ENCODE measurements at regions of chr14 and their contacts with region 1.

Region 1: DNA sequence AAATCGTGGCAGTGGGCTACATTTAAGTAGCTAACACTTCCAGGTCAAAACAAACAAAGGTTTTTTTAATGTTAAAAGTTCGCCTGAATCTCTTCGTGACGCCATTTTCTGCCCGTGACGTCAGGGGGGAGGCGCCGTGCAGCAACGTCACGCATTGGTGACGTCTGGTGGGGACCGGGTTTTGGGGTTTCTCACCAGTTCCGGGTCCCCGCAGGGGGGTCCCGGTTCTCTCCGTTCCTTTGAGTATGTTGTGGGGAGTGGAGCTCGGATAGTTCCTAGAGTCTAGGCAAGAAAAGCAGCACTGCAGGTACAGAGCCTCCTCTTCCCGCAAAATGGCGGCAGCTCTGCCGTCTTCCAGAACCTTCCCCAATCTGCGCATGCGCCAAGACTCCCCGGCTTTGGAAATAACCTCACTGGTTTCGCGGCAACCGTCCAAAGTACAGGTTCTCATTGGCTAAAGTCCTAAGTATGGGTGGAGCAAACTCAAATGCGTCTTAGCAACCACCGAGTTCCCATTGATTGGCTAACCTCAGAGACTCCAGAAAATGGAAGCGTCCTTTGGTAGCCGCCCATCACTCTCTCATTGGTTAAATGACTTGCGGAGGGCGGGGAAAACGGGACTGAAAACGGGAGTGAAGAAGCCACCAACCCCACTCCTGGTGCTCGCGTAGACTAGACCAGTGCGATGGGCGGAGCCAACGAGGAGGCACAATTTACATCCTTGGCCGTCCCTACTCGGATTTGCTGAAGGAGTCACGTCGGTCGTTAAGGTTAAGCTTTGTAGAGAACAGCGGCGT is at the start of gene RBM23:
- DNase-seq: peak; percentile 100
- ATAC-seq: peak; percentile 92 to 96 (median 94)
- H3K4me3 ChIP-seq: peak within 1 kb of the TSS; percentile 55 to 94 (median 75)
- H3K27ac ChIP-seq: peak within 1 kb of the TSS; percentile 87 to 100 (median 95)
- H3K4me1 ChIP-seq: peaks cover 0 to 55% (median 24%) of the 10 kb centered on the region in 12 donors
- H3K27me3 ChIP-seq: no peaks in the 10 kb centered on the region
- CTCF ChIP-seq: no peak
- POLR2A ChIP-seq: peak; percentile 72 to 83
- total RNA-seq, gene RBM23: 35.4 to 45.0 (median 41.6) TPM

Region 2: DNA sequence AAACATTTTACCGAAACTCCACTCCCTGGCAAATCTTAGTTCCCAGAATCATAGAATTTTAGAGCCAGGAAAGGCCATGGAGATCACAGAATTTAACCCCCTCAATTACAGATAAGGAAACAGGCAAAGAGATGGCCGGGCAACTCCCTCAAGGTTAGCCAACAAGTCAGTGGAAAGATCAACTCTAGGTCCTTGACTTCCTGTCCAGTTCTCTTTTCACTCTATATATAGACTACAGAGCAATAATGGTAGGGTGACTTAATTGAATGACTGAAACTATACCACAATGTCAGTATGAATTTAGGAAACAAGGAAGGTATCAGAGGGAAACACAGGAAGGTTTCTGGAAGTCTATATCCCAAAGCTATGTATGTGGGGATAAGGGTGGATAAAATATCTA is 140.9 kb before region 1 on chr14:
- intact Hi-C with region 1: no loop called
- DNase-seq: no peak
- ATAC-seq: peak in 2 of 4 donors; percentile 25 to 49
- H3K4me3 ChIP-seq: no peak overlapping the region
- H3K27ac ChIP-seq: no peak overlapping the region
- H3K4me1 ChIP-seq: peaks cover 0 to 49% (median 0%) of the 10 kb centered on the region in 12 donors
- H3K27me3 ChIP-seq: no peaks in the 10 kb centered on the region
- CTCF ChIP-seq: no peak
- POLR2A ChIP-seq: no peak

Region 3: GRCh38 chr14:22852940-22853767 is 65.8 kb before region 1 on chr14:
- intact Hi-C with region 1: no loop called
- DNase-seq: peak; percentile 84 to 95 (median 87)
- ATAC-seq: peak; percentile 51 to 70 (median 66)
- H3K4me3 ChIP-seq: peak overlapping the region in 11 of 12 donors; percentile 13 to 69 (median 54)
- H3K27ac ChIP-seq: peak overlapping the region in 7 of 12 donors; percentile 27 to 68 (median 40)
- H3K4me1 ChIP-seq: peaks cover 3 to 51% (median 44%) of the 10 kb centered on the region in 12 donors
- H3K27me3 ChIP-seq: no peaks in the 10 kb centered on the region
- CTCF ChIP-seq: peak; percentile 74 to 97 (median 90)
- POLR2A ChIP-seq: no peak

Region 4: GRCh38 chr14:22872033-22872832 is 46.8 kb before region 1 on chr14:
- intact Hi-C with region 1: loop called in 2 of 10 experiments (anchors 5 kb)
- DNase-seq: peak; percentile 70 to 80 (median 76)
- ATAC-seq: peak; percentile 6 to 60 (median 51)
- H3K4me3 ChIP-seq: peak overlapping the region; percentile 66 to 100 (median 95)
- H3K27ac ChIP-seq: peak overlapping the region; percentile 90 to 100 (median 98)
- H3K4me1 ChIP-seq: peaks cover 4 to 32% (median 18%) of the 10 kb centered on the region in 12 donors
- H3K27me3 ChIP-seq: no peaks in the 10 kb centered on the region
- CTCF ChIP-seq: peak; percentile 85 to 95 (median 89)
- POLR2A ChIP-seq: no peak